Activated CD4-positive, alpha-beta T cell treated with anti-CD3 and anti-CD28 coated beads for 36 hours (primary cell): ENCODE measurements at regions of chr7 and their contacts with region 1.

Region 1: DNA sequence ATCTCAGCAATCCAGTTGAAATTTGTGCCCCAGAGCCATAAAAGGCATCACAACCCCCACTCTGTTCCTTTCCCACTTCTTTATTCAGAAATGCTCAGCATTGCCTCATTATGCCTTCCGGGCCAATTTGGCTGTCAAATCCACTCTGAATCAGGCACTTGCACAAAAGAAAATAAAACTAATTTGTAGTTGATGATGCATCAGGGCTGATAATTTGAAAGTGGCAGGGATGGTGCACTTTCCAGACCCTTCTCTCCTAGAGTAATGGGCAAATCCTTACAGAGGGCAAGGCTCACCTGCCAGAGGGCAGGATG is 147.9 kb upstream of the PDE1C start:
- DNase-seq: no peak
- ATAC-seq: no peak
- H3K4me3 Mint-ChIP-seq: no peak overlapping the region
- H3K27ac Mint-ChIP-seq: no peak overlapping the region
- H3K4me1 Mint-ChIP-seq: no peaks in the 10 kb centered on the region
- H3K27me3 Mint-ChIP-seq: peaks cover 4% of the 10 kb centered on the region

Region 2: DNA sequence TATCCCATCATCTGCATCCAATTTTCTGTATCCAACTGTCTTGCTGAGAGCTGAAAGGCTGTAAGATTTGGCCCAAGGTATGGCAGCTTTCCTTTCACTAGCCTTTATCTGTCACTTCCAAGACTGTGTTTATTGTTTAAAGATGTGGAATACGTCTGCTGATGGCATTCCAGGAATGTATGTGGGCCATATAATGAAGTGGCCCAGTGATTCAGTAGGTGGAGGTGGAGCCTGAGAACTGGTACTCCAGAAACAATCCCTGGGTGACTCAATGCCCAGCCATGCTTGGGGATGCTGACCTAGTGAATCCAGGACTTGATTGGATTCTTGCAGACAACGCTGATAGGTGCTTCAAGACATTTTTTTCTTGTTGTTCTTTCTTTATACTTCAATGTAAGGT is 891.0 kb before region 1 on chr7:
- CTCF ChIA-PET with region 1: no interaction called
- POLR2A ChIA-PET with region 1: no interaction called
- intact Hi-C with region 1: no loop called
- DNase-seq: no peak
- ATAC-seq: no peak
- H3K4me3 Mint-ChIP-seq: no peak overlapping the region
- H3K27ac Mint-ChIP-seq: no peak overlapping the region
- H3K4me1 Mint-ChIP-seq: no peaks in the 10 kb centered on the region
- H3K27me3 Mint-ChIP-seq: peaks cover 2% of the 10 kb centered on the region

Region 3: GRCh38 chr7:32137059-32137458 is 81.1 kb before region 1 on chr7:
- CTCF ChIA-PET with region 1: no interaction called
- POLR2A ChIA-PET with region 1: no interaction called
- intact Hi-C with region 1: loop called in 1 of 2 experiments (anchors 10 kb)
- DNase-seq: no peak
- ATAC-seq: no peak
- H3K4me3 Mint-ChIP-seq: no peak overlapping the region
- H3K27ac Mint-ChIP-seq: no peak overlapping the region
- H3K4me1 Mint-ChIP-seq: no peaks in the 10 kb centered on the region
- H3K27me3 Mint-ChIP-seq: no peaks in the 10 kb centered on the region

Region 4: GRCh38 chr7:32275216-32275979 is 57.3 kb after region 1 on chr7:
- CTCF ChIA-PET with region 1: no interaction called
- POLR2A ChIA-PET with region 1: no interaction called
- intact Hi-C with region 1: loop called in 1 of 2 experiments (anchors 10 kb)
- DNase-seq: peak; percentile 30
- ATAC-seq: peak; percentile 26
- H3K4me3 Mint-ChIP-seq: no peak overlapping the region
- H3K27ac Mint-ChIP-seq: no peak overlapping the region
- H3K4me1 Mint-ChIP-seq: no peaks in the 10 kb centered on the region
- H3K27me3 Mint-ChIP-seq: peaks cover 8% of the 10 kb centered on the region